ENCODE measurements at regions of chr11 and their contacts with region 1.

Region 1: GRCh38 chr11:116073854-116074837 is 569.9 kb upstream of the CADM1 start:
- DNase-seq: no peak
- ATAC-seq: no peak
- H3K4me3 ChIP-seq: no peak overlapping the region
- H3K27ac ChIP-seq: no peak overlapping the region
- H3K4me1 ChIP-seq: no peaks in the 10 kb centered on the region; a peak in 1 of 5 replicates
- H3K27me3 ChIP-seq: peaks cover 0 to 8% of the 10 kb centered on the region in 2 experiments; a peak in 2 of 5 replicates
- CTCF ChIP-seq: no peak
- EP300 ChIP-seq: no peak
- POLR2A ChIP-seq: no peak
- RAD21 ChIP-seq: no peak

Region 2: DNA sequence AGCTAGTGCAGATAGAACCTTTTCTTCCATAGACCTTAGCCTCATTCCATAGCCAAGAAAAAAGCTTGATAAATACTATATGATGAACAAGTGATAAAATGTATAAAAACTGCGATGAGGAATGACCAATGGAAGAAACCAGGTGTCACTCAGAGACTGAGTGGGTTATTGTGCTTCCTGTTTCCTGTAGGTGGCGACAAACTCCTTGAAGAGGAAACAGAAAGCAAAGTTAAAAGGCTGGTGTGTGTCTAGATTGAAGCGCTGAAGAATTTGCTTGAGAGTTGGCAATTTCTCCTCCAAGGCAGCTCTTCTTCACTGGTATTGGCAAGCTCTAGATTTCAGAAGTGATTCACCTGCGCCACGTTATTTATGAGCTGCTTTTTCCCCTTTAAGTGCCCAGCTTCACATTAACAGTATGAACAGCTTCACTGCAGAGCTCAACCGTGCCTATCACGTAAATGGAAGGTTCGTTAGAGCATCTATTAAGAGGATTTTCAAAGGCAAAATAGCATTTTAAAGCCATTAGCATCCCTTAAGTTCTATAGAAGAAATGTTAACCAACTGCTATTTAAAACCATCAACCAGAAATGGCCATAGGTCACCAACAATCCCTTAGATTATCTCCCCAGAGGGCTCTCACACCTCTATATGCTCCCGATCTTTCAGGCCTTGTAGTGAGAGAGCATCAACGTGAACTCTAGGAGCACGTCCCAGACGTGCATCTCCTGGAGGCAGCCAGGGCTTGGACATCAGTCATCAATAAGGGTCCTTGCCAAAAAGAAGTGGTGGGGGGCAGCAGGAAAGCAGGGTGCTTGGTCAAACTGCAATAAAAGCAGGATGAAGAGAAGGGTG is 749.3 kb before region 1 on chr11:
- CTCF ChIA-PET with region 1: no interaction called
- POLR2A ChIA-PET with region 1: no interaction called
- in situ Hi-C with region 1: loop called (anchors 25 kb)
- intact Hi-C with region 1: no loop called
- DNase-seq: peak; percentile 34 to 49 (median 44)
- ATAC-seq: peak; percentile 92
- H3K4me3 ChIP-seq: no peak overlapping the region
- H3K27ac ChIP-seq: no peak overlapping the region
- H3K4me1 ChIP-seq: no peaks in the 10 kb centered on the region
- H3K27me3 ChIP-seq: no peaks in the 10 kb centered on the region
- CTCF ChIP-seq: peak; percentile 65 to 85 (median 70)
- EP300 ChIP-seq: no peak
- POLR2A ChIP-seq: no peak
- RAD21 ChIP-seq: peak; percentile 72 to 74

Region 3: GRCh38 chr11:115980337-115981103 is 93.6 kb before region 1 on chr11:
- CTCF ChIA-PET with region 1: no interaction called
- POLR2A ChIA-PET with region 1: no interaction called
- in situ Hi-C with region 1: no loop called
- intact Hi-C with region 1: no loop called
- DNase-seq: no peak
- ATAC-seq: no peak
- H3K4me3 ChIP-seq: no peak overlapping the region
- H3K27ac ChIP-seq: no peak overlapping the region
- H3K4me1 ChIP-seq: no peaks in the 10 kb centered on the region
- H3K27me3 ChIP-seq: no peaks in the 10 kb centered on the region
- CTCF ChIP-seq: no peak
- EP300 ChIP-seq: no peak
- POLR2A ChIP-seq: no peak
- RAD21 ChIP-seq: no peak

Region 4: GRCh38 chr11:116096272-116096995 is 22.3 kb after region 1 on chr11:
- CTCF ChIA-PET with region 1: no interaction called
- POLR2A ChIA-PET with region 1: no interaction called
- in situ Hi-C with region 1: no loop called
- intact Hi-C with region 1: no loop called
- DNase-seq: no peak
- ATAC-seq: no peak
- H3K4me3 ChIP-seq: no peak overlapping the region
- H3K27ac ChIP-seq: no peak overlapping the region
- H3K4me1 ChIP-seq: no peaks in the 10 kb centered on the region
- H3K27me3 ChIP-seq: no peaks in the 10 kb centered on the region
- CTCF ChIP-seq: no peak
- EP300 ChIP-seq: no peak
- POLR2A ChIP-seq: no peak
- RAD21 ChIP-seq: no peak

Measured in K562 (cell line).